Activated B cell treated with CpG ODN at 0.5 μM for 24 hours (primary cell): ENCODE measurements at regions of chr18 and their contacts with region 1.

Region 1: DNA sequence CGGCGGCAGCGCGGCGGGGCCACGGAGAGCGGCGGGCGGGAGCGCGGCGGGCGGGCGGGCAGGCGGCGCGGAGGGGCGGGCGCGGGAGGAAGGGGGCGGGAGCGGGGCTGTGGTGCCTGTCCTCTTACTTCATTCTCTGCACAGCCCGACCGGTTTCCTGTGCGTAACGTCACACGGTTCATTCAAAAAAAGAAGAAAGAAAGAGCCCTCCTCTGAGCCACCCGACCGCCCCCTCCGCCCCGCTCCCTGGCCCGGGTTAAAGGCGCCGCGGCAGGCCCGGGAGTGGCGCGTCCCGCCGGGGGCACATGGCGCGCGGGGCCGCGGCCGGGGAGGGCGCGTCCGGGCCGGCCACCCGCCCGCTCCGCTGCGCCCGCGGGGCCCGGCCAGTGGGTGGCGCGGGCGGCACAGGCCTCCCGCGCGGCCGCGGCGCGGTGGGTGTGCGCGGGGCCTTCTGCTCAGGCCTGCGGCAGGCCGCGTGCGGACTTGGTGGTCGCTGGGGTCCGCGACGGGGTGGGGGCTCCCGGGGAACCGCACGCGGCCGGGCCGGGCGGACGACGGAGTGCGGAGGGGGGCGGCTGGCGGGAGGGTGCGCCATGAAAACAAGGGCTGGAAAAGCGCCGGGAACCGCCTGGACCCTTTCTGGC is 599 bp upstream of the BCL2 start:
- DNase-seq: peak; percentile 78
- ATAC-seq: peak; percentile 77
- H3K4me3 Mint-ChIP-seq: peak overlapping the region; percentile 87
- H3K27ac Mint-ChIP-seq: peak overlapping the region; percentile 85
- H3K4me1 Mint-ChIP-seq: peaks cover 49% of the 10 kb centered on the region
- H3K27me3 Mint-ChIP-seq: no peaks in the 10 kb centered on the region
- CTCF ChIP-seq: no peak

Region 2: DNA sequence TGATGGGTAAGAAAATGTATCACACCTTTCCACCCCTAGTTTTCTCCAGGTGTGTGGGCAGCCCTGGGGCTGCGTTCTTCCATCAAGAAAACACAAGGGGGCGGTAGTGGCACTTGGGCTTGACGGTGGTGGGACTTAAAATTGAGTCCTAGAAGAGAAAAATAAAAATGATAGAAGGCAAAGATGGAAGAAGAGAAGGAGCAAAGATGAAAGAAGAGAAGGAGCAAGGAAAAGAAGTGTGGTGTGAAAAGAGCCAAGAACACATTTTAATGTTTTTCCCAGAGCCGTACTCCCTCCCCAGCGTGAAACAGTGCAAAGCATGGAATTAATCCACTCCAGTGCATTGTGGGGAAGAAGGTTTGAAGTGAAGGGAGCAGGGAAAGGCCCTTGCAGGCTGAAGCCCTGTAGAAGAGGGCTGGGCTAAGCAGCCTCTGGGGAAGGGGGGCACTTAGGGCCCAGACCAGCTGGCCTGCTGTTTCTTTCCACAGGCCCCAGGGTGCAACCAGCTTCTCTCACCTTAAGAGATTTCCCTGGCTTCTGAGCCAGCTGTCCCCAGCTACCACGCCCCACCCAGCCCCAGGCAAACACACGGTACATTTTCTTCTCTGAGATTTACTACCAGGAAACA is 1684.2 kb before region 1 on chr18:
- CTCF ChIA-PET with region 1: no interaction called
- POLR2A ChIA-PET with region 1: no interaction called
- intact Hi-C with region 1: no loop called
- DNase-seq: no peak
- ATAC-seq: no peak
- H3K4me3 Mint-ChIP-seq: no peak overlapping the region
- H3K27ac Mint-ChIP-seq: no peak overlapping the region
- H3K4me1 Mint-ChIP-seq: no peaks in the 10 kb centered on the region
- H3K27me3 Mint-ChIP-seq: peaks cover 2% of the 10 kb centered on the region
- CTCF ChIP-seq: no peak

Region 3: GRCh38 chr18:62186774-62187542 is 1133.2 kb before region 1 on chr18 and contains the starts of genes PIGN and RELCH:
- CTCF ChIA-PET with region 1: no interaction called
- POLR2A ChIA-PET with region 1: no interaction called
- intact Hi-C with region 1: loop called (anchors 2 kb)
- DNase-seq: peak; percentile 73
- ATAC-seq: peak; percentile 94
- H3K4me3 Mint-ChIP-seq: peak within 1 kb of the TSS; percentile 98
- H3K27ac Mint-ChIP-seq: peak within 1 kb of the TSS; percentile 95
- H3K4me1 Mint-ChIP-seq: peaks cover 58% of the 10 kb centered on the region
- H3K27me3 Mint-ChIP-seq: no peaks in the 10 kb centered on the region
- CTCF ChIP-seq: no peak
- total RNA-seq, gene PIGN: 26.4 and 29.4 TPM in 2 replicates
- total RNA-seq, gene RELCH: 45.4 and 59.0 TPM in 2 replicates

Region 4: GRCh38 chr18:62505669-62506494 is 814.3 kb before region 1 on chr18:
- CTCF ChIA-PET with region 1: no interaction called
- POLR2A ChIA-PET with region 1: no interaction called
- intact Hi-C with region 1: no loop called
- DNase-seq: no peak
- ATAC-seq: peak; percentile 84
- H3K4me3 Mint-ChIP-seq: peak overlapping the region; percentile 73
- H3K27ac Mint-ChIP-seq: peak overlapping the region; percentile 92
- H3K4me1 Mint-ChIP-seq: peaks cover 19% of the 10 kb centered on the region
- H3K27me3 Mint-ChIP-seq: no peaks in the 10 kb centered on the region
- CTCF ChIP-seq: no peak

Region 5: DNA sequence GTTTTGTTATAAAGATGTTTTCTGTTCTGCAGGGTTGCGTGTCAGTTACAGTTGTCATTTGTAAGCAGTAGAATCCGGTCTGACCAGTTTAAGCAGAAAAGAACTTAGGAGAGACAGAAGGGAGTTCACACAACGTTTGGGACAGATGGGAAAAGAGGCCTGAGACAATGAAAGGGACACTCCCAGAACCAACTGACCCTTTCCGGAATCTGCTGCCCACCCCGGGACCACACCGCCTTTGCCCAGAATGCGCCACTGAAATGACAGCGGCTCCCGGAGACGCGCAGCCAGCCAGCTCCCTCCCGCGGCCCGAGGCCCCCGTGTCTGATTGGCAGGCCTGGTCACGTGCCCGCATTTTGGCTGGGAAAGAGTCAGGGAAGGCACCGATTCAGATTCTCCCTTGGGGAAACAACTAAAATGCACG is 245.2 kb before region 1 on chr18:
- CTCF ChIA-PET with region 1: interaction called, 3 read pairs
- POLR2A ChIA-PET with region 1: no interaction called
- intact Hi-C with region 1: loop called (anchors 1 kb)
- DNase-seq: peak; percentile 45
- ATAC-seq: peak; percentile 58
- H3K4me3 Mint-ChIP-seq: peak overlapping the region; percentile 78
- H3K27ac Mint-ChIP-seq: peak overlapping the region; percentile 0
- H3K4me1 Mint-ChIP-seq: peaks cover 25% of the 10 kb centered on the region
- H3K27me3 Mint-ChIP-seq: no peaks in the 10 kb centered on the region
- CTCF ChIP-seq: no peak

Region 6: DNA sequence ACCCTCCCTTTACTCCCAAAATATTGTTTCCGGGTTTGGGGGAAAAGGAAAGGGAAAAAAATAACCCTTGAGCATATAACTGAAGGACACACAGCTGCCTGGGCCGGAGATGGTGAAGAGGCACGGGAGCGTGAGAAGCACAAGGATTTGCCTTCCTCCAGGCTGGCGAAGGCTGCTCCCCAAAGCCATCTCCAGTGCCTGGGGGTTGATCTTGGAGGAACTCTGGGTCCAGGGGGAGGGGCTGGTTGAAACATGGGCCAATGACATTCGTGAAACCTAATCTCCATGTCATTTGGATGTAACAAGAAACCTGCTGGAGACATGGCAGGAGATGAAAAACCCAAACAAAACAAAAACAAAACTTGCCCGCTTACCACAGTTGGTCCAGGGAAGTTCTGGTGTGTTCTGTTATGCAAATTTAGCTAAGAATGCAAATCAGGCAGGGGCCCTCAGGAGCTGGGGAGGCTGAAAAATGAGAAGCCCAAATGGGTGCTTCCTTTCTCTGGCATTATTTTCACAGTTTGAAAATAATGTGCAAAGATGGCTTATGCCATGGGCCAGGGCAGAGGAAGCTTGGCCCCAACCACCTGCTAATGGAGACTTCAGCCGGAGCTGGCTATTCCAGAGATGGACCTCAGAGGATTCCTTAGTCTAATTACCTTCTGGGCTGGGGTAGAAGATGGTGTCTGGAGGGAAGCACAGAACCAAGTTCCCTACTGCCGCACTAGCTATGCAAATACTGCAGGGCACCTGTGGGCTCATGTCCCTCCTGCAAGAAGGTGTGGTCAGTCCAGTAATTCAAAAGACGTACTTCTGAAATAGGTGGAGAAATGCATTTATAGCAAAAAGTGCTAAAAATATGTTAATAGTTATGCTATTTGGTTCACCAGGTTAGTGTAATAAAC is 181.5 kb before region 1 on chr18:
- CTCF ChIA-PET with region 1: interaction called, 80 read pairs
- POLR2A ChIA-PET with region 1: interaction called, 46 read pairs
- intact Hi-C with region 1: loop called (anchors 2 kb)
- DNase-seq: no peak
- ATAC-seq: peak; percentile 47
- H3K4me3 Mint-ChIP-seq: peak overlapping the region; percentile 82
- H3K27ac Mint-ChIP-seq: peak overlapping the region; percentile 90
- H3K4me1 Mint-ChIP-seq: peaks cover 86% of the 10 kb centered on the region
- H3K27me3 Mint-ChIP-seq: no peaks in the 10 kb centered on the region
- CTCF ChIP-seq: no peak

Region 7: GRCh38 chr18:63180971-63181376 is 139.2 kb before region 1 on chr18:
- CTCF ChIA-PET with region 1: interaction called, 9 read pairs
- POLR2A ChIA-PET with region 1: interaction called, 14 read pairs
- intact Hi-C with region 1: no loop called
- DNase-seq: no peak
- ATAC-seq: peak; percentile 5
- H3K4me3 Mint-ChIP-seq: peak overlapping the region; percentile 72
- H3K27ac Mint-ChIP-seq: peak overlapping the region; percentile 82
- H3K4me1 Mint-ChIP-seq: peaks cover 94% of the 10 kb centered on the region
- H3K27me3 Mint-ChIP-seq: no peaks in the 10 kb centered on the region
- CTCF ChIP-seq: no peak

Region 8: GRCh38 chr18:63367053-63367953 is 47.1 kb after region 1 on chr18 and contains the start of gene KDSR:
- CTCF ChIA-PET with region 1: no interaction called
- POLR2A ChIA-PET with region 1: no interaction called
- intact Hi-C with region 1: loop called (anchors 2 kb)
- DNase-seq: peak; percentile 88
- ATAC-seq: peak; percentile 92
- H3K4me3 Mint-ChIP-seq: peak within 1 kb of the TSS; percentile 88
- H3K27ac Mint-ChIP-seq: peak within 1 kb of the TSS; percentile 71
- H3K4me1 Mint-ChIP-seq: peaks cover 23% of the 10 kb centered on the region
- H3K27me3 Mint-ChIP-seq: no peaks in the 10 kb centered on the region
- CTCF ChIP-seq: no peak
- total RNA-seq, gene KDSR: 15.0 and 15.3 TPM in 2 replicates